ENCODE measurements at regions of chr17 and their contacts with region 1.

Region 1: GRCh38 chr17:43861024-43861621 is 14.1 kb downstream of the CD300LG start:
- DNase-seq: no peak
- H3K4me3 ChIP-seq: no peak overlapping the region
- H3K27ac ChIP-seq: no peak overlapping the region
- H3K4me1 ChIP-seq: peaks cover 0 to 4% (median under 1%) of the 10 kb centered on the region in 4 experiments; a peak in 3 of 7 replicates
- H3K27me3 ChIP-seq: no peaks in the 10 kb centered on the region
- CTCF ChIP-seq: no peak
- EP300 ChIP-seq: no peak
- POLR2A ChIP-seq: no peak
- RAD21 ChIP-seq: no peak

Region 2: DNA sequence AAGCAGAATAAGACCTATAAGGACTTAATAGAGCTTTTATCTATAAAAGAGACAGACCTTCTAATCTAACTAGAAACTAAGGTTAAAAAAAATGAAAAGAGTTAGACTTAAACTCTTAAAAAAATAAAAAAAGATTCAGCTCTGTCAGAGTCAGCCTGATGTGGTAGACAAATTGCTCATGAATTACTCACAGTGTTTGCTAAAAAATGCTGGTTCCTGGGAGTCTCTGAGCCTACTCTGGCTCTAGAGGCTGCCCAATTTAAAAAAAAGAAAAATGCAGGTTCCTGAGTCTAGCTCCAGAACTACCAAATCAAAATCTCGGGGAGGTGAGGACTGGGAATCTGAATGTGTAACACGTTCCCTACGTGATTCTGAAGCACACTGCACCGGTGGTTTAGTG is 120.6 kb before region 1 on chr17:
- CTCF ChIA-PET with region 1: no interaction called
- POLR2A ChIA-PET with region 1: no interaction called
- DNase-seq: no peak
- H3K4me3 ChIP-seq: no peak overlapping the region
- H3K27ac ChIP-seq: no peak overlapping the region
- H3K4me1 ChIP-seq: peaks cover 3 to 17% (median 6%) of the 10 kb centered on the region in 4 experiments
- H3K27me3 ChIP-seq: no peaks in the 10 kb centered on the region
- CTCF ChIP-seq: no peak
- EP300 ChIP-seq: no peak
- POLR2A ChIP-seq: no peak
- RAD21 ChIP-seq: no peak

Region 3: GRCh38 chr17:43840814-43841213 is 20.3 kb before region 1 on chr17:
- CTCF ChIA-PET with region 1: interaction called, 27 read pairs
- POLR2A ChIA-PET with region 1: no interaction called
- DNase-seq: no peak
- H3K4me3 ChIP-seq: no peak overlapping the region
- H3K27ac ChIP-seq: no peak overlapping the region
- H3K4me1 ChIP-seq: no peaks in the 10 kb centered on the region
- H3K27me3 ChIP-seq: peaks cover 0 to 1% (median 0%) of the 10 kb centered on the region in 4 experiments; a peak in 2 of 7 replicates
- CTCF ChIP-seq: peak; percentile 26 to 63 (median 52)
- EP300 ChIP-seq: no peak
- POLR2A ChIP-seq: no peak
- RAD21 ChIP-seq: peak; percentile 39 to 56

Measured in H1 (cell line).